ENCODE measurements at regions of chr2 and their contacts with region 1.

Region 1: GRCh38 chr2:24971536-24972314 is at the start of gene DNAJC27:
- DNase-seq: peak; percentile 98 to 99
- ATAC-seq: peak; percentile 86 to 96 (median 87)
- H3K4me3 ChIP-seq: peak within 1 kb of the TSS; percentile 96
- H3K4me3 Mint-ChIP-seq: peak within 1 kb of the TSS; percentile 98
- H3K27ac ChIP-seq: peak within 1 kb of the TSS; percentile 96
- H3K27ac Mint-ChIP-seq: peak within 1 kb of the TSS; percentile 100
- H3K4me1 ChIP-seq: peaks cover 13% of the 10 kb centered on the region
- H3K4me1 Mint-ChIP-seq: peaks cover 20 to 24% of the 10 kb centered on the region in 2 donors
- H3K27me3 ChIP-seq: no peaks in the 10 kb centered on the region
- H3K27me3 Mint-ChIP-seq: no peaks in the 10 kb centered on the region
- CTCF ChIP-seq: no peak
- total RNA-seq, gene DNAJC27: 14.1 to 19.7 (median 16.6) TPM

Region 2: GRCh38 chr2:24984912-24985311 is 13.2 kb after region 1 on chr2:
- intact Hi-C with region 1: no loop called
- DNase-seq: no peak
- ATAC-seq: no peak
- H3K4me3 ChIP-seq: no peak overlapping the region
- H3K4me3 Mint-ChIP-seq: no peak overlapping the region
- H3K27ac ChIP-seq: no peak overlapping the region
- H3K27ac Mint-ChIP-seq: no peak overlapping the region
- H3K4me1 ChIP-seq: no peaks in the 10 kb centered on the region
- H3K4me1 Mint-ChIP-seq: no peaks in the 10 kb centered on the region
- H3K27me3 ChIP-seq: no peaks in the 10 kb centered on the region
- H3K27me3 Mint-ChIP-seq: peaks cover 16 to 18% of the 10 kb centered on the region in 2 donors
- CTCF ChIP-seq: no peak

Region 3: GRCh38 chr2:25041928-25042320 is 70.2 kb after region 1 on chr2 and contains the start of gene EFR3B:
- intact Hi-C with region 1: loop called (anchors 2 kb)
- DNase-seq: peak; percentile 78 to 95
- ATAC-seq: peak; percentile 97 to 99 (median 98)
- H3K4me3 ChIP-seq: peak within 1 kb of the TSS; percentile 36
- H3K4me3 Mint-ChIP-seq: peak within 1 kb of the TSS; percentile 84
- H3K27ac ChIP-seq: no peak within 1 kb of the TSS
- H3K27ac Mint-ChIP-seq: peak within 1 kb of the TSS in 1 of 2 donors; percentile 76
- H3K4me1 ChIP-seq: peaks cover 21% of the 10 kb centered on the region
- H3K4me1 Mint-ChIP-seq: peaks cover 13 to 29% of the 10 kb centered on the region in 2 donors
- H3K27me3 ChIP-seq: peaks cover 24% of the 10 kb centered on the region
- H3K27me3 Mint-ChIP-seq: peaks cover 25 to 27% of the 10 kb centered on the region in 2 donors
- CTCF ChIP-seq: no peak
- total RNA-seq, gene EFR3B: 0.05 TPM in 1 of 3 donors, not detected in the others

Region 4: DNA sequence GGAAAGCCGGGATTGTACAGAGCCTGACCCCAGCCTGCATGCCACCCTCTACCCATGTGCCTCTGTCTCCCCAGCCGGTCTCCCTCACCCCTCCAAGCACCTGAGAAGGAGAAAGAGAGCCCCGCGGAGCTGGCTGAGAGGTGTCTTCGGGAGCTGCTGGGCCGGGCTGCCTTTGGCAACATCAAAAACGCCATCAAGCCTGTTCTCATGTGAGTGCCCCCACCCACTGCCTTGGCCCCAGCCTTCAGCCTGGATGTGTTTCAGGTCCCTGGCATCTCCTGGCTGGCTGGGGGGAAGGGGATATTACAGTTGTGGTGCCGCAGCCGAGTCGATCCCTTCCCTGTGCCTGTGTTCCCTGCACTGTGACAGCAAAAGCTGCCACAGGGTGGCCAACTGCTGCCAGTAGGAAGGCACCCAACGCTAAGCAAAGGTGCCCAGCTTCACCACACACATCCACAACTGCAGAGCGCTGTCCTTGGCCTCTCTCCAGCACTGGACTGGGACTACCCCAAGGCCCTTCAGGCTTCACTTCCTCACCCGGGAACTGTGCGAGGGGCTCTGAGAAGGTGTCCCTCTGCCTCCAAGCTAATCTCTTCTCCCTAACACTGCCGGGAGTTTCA is 158.3 kb after region 1 on chr2:
- intact Hi-C with region 1: loop called (anchors 1 kb)
- DNase-seq: no peak
- ATAC-seq: no peak
- H3K4me3 ChIP-seq: no peak overlapping the region
- H3K4me3 Mint-ChIP-seq: no peak overlapping the region
- H3K27ac ChIP-seq: no peak overlapping the region
- H3K27ac Mint-ChIP-seq: no peak overlapping the region
- H3K4me1 ChIP-seq: peaks cover 14% of the 10 kb centered on the region
- H3K4me1 Mint-ChIP-seq: peaks cover 0 to 10% of the 10 kb centered on the region in 2 donors
- H3K27me3 ChIP-seq: peaks cover 30% of the 10 kb centered on the region
- H3K27me3 Mint-ChIP-seq: peaks cover 43 to 46% of the 10 kb centered on the region in 2 donors
- CTCF ChIP-seq: no peak

Region 5: DNA sequence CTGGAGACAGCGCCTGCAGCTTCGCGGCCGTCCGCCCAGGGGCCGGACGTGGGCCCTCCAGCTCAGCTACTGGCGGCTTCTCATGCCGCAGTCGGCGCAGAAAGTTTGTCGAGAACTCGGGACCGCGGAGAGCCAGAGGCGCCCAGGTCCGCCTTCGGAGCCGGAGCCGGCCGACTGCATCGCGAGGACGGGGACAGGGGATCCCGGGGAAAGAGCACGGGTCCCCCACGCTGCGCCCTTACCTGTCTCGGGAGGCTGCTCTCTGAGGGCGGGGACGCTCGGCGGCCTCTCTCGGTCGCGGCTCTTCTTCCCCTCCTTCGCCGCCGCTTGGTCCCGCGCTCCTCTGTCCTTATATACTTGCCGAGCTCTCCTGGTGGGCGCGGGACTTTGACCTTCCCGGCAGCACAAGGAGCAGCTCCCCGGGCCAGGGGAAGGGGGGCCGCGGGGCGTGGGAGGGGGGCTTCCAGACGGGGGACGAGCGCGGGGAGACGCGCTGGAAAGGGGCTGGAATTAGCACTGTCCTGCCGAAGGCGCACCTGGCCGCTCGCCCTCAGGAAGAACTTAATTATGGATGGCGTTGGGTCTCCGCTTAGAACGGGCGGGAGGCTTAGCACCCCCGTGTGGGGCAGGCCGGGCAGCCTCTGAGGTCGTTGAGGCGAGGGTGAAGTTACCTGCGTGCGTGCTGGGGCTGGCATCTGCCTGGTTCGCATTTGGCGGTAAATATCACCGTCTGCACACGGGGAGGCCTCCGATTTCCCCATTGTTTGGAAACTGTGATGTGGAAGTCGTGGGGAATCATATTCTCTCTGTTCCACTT is 196.7 kb after region 1 on chr2 and contains the start of gene POMC:
- intact Hi-C with region 1: no loop called
- DNase-seq: peak; percentile 34 to 53
- ATAC-seq: peak; percentile 69 to 87 (median 74)
- H3K4me3 ChIP-seq: peak within 1 kb of the TSS; percentile 17
- H3K4me3 Mint-ChIP-seq: peak within 1 kb of the TSS; percentile 68
- H3K27ac ChIP-seq: no peak within 1 kb of the TSS
- H3K27ac Mint-ChIP-seq: peak within 1 kb of the TSS in 1 of 2 donors; percentile 20
- H3K4me1 ChIP-seq: peaks cover 19% of the 10 kb centered on the region
- H3K4me1 Mint-ChIP-seq: peaks cover 0 to 12% of the 10 kb centered on the region in 2 donors
- H3K27me3 ChIP-seq: peaks cover 31% of the 10 kb centered on the region
- H3K27me3 Mint-ChIP-seq: peaks cover 64 to 65% of the 10 kb centered on the region in 2 donors
- CTCF ChIP-seq: no peak
- total RNA-seq, gene POMC: 4.9 to 6.6 (median 6.0) TPM

Region 6: DNA sequence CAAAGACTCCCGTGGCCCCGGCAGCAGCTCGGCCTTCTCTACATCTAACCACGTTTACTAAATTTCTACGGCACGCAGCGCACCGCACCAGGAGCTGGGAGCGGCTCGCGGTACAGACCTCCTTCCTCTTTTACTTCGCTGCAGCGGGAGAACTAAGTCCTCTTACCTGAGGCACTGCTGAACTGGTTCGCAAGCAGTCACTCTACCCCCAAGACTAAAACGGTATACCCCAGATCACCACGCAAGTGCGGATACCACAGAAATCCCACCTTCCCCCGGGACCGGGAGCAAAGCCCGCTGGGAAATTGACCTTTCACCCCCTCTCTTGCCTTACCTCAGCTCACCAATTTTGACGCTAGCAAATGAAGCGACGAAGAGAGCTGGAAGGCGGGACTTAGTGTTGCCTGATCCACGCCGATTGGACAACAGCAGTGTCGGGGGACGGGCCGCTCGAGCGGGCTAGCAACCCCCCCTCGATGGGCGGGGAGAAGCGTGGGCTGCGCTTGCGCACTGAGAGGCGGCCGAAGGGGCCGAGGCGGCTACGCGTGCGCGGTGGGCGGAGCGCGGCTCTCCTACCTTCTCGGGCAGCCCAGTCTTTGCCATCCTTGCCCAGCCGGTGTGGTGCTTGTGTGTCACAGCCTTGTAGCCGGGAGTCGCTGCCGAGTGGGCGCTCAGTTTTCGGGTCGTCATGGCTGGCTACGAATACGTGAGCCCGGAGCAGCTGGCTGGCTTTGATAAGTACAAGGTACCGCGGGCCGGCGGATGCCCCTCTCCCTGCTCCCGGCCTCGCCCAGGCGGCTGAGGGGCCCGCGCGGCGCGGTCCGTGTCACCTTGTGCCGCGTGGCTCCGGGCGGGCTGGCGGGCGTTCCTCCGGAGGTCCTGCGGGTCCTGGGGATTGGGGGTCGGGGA is 1374.1 kb after region 1 on chr2 and contains the start of gene SELENOI:
- intact Hi-C with region 1: loop called (anchors 5 kb)
- DNase-seq: peak; percentile 99 to 100
- ATAC-seq: peak; percentile 92 to 98 (median 95)
- H3K4me3 ChIP-seq: peak within 1 kb of the TSS; percentile 90
- H3K4me3 Mint-ChIP-seq: peak within 1 kb of the TSS; percentile 99
- H3K27ac ChIP-seq: peak within 1 kb of the TSS; percentile 91
- H3K27ac Mint-ChIP-seq: peak within 1 kb of the TSS; percentile 95 to 99
- H3K4me1 ChIP-seq: peaks cover 16% of the 10 kb centered on the region
- H3K4me1 Mint-ChIP-seq: peaks cover 35 to 38% of the 10 kb centered on the region in 2 donors
- H3K27me3 ChIP-seq: no peaks in the 10 kb centered on the region
- H3K27me3 Mint-ChIP-seq: no peaks in the 10 kb centered on the region
- CTCF ChIP-seq: no peak
- total RNA-seq, gene SELENOI: 28.1 to 47.6 (median 36.4) TPM